Mucosa of descending colon (tissue), 3 donors: ENCODE measurements at regions of chr5 and their contacts with region 1.

Region 1: DNA sequence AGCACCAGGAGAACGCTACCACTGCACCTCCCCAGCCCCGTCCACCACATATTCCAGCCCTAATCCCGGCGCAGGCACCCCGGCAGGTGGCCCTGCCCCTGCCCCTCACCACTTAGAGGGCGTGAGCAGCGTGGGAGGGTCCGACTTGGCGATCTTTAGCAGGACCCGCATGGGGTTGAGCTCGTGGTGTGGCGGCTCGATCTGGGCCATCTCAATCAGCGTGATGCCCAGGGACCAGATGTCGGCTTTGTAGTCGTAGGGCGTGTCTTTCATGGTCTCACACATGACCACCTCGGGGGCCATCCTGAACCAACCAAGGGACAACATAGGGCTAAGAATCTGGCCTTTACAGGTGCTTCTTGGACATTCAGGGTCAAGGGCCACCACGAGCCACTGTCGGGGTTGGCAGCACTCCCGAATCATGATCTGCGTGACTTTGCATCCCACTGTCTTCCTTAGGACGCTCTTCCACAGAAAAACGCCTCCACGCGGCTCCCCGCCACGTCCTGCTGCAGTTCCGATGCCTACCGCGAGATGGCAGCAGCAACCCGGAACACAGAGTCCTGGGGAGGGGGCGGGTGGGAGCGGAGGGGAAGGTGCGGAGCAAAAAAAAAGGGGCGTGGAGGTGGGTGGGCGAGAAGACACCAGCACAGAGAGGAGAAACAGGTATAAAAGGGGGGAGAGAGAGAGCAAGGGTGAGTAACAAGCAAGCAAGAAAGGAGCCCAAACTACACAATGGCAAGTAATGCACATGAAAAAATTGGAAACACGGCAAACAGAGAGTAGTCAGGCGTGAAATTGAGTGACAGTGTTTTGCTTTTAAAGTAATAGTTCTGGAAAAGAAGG is 81.3 kb downstream of the STK10 start:
- DNase-seq: peak in 2 of 3 donors; percentile 74 to 79
- ATAC-seq: peak; percentile 35
- H3K4me3 ChIP-seq: no peak overlapping the region
- H3K4me1 ChIP-seq: peaks cover 6% of the 10 kb centered on the region
- CTCF ChIP-seq: peak; percentile 95

Region 2: DNA sequence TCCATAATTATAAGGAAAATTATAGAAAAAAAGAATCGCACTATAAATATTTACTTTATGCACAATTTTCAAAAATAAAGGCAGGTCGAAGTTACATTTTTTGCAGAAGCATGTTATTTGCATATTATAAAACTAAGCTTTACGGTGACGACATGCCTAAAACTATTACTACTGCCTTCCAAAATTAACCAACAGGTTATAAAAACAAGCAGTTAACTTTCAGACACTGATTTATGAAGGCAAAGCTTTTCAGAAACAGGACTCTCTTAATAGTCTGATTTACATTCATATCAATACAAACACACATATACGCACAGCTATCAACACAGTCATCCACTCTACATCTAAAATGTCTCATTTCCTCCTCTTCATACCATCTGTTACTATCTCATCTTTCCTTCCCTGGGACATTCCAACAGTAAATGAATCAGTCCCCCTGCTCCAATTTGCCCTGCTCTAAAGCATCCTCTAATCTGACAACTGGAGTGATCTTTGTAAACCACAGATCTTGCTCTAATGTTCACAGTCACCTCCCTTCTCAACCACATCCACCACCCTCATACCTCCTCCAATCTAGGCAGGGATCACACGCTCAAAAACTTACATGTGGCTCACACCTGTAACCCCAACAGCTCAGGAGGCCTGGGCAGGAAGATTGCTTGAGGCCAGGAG is 121.8 kb before region 1 on chr5:
- intact Hi-C with region 1: no loop called
- DNase-seq: no peak
- ATAC-seq: no peak
- H3K4me3 ChIP-seq: no peak overlapping the region
- H3K4me1 ChIP-seq: peaks cover 6% of the 10 kb centered on the region
- CTCF ChIP-seq: no peak

Region 3: GRCh38 chr5:172188033-172188892 is 81.5 kb after region 1 on chr5 and contains the start of gene STK10:
- intact Hi-C with region 1: loop called (anchors 5 kb)
- DNase-seq: peak; percentile 88 to 95 (median 95)
- ATAC-seq: peak; percentile 86
- H3K4me3 ChIP-seq: peak within 1 kb of the TSS; percentile 77
- H3K4me1 ChIP-seq: peaks cover 6% of the 10 kb centered on the region
- CTCF ChIP-seq: peak; percentile 83
- total RNA-seq, gene STK10: 22.7 to 36.3 (median 29.9) TPM

Region 4: DNA sequence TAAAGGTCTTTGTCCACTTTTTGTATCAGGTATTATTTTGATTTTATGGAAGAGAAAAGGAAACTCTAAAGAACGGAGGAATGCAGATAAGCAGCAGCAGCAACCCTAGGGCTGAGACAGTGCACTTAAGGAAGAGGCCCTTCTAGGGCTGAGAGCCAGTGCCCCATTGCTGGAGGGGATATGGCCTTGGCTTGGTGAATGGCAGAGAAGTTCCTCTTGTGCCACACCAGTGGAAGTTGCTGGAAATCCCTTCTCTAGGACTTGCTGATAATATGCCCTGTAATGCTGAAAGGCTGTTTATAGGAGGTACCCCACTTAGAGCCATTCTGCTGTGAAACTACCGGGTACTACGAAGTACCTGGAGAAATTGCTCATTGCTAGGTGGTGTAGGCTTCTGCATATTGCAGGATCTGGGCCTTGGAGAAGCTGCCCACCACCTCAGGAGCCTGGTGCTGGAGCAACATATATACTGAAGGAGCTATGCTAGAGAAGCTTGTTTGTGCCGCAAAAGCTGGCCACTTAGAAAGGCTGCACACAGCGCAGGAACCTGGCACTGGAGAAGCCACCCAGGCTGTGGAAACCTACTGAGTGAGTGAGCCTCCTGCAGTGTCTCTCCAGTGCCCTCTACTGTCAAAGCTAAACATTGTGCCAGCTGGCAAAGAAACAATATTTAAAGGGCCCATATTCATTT is 186.5 kb after region 1 on chr5:
- intact Hi-C with region 1: loop called (anchors 10 kb)
- DNase-seq: peak in 2 of 3 donors; percentile 50 to 71
- ATAC-seq: peak; percentile 100
- H3K4me3 ChIP-seq: no peak overlapping the region
- H3K4me1 ChIP-seq: no peaks in the 10 kb centered on the region
- CTCF ChIP-seq: peak; percentile 71